ENCODE measurements at regions of chr2 and their contacts with region 1.

Region 1: DNA sequence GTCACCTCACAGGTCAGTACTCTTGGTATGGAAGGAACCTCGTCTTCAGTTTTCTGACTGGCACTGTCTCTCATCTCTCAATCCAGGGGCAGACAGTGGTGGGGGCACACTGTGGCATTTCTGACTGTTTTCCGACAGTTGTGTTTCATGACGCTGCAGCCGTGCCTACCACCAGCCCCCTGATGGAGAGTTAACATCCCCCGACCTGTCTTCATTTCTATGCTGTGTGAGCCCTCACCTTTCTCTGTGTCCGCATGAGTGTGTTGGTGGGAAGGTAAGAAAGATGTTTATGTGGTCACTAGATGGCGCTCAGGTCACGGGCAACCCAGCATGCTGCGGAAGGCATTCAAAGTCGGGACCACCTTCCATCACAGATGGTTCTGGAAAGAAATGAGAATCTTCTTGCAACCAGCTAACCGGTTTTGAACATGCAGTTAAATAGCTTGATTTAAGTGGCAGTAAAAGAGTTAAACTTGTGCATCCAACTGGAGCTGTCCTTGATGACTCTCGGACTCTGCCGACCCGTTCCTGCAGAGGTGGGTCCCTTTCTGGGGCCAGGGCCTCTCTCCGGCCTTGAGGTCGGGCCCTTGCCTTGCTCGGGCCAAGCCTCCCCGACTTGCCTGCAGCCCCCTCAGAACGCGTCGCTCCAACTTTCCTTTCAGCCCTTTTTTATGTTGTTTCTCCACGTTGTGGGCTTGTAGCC is 92.4 kb downstream of the DYSF start:
- DNase-seq: peak in 1 of 2 donors; percentile 44
- ATAC-seq: peak; percentile 46 to 60
- H3K4me3 ChIP-seq: peak overlapping the region in 1 of 4 donors; percentile 30
- H3K27ac ChIP-seq: peak overlapping the region in 3 of 4 donors; percentile 46 to 69 (median 69)
- H3K4me1 ChIP-seq: no peaks in the 10 kb centered on the region
- H3K27me3 ChIP-seq: no peaks in the 10 kb centered on the region
- CTCF ChIP-seq: peak; percentile 46 to 74 (median 64)
- POLR2A ChIP-seq: no peak

Region 2: GRCh38 chr2:71784734-71785473 is 239.2 kb after region 1 on chr2:
- in situ Hi-C with region 1: loop called in 1 of 4 experiments (anchors 10 kb)
- intact Hi-C with region 1: no loop called
- DNase-seq: peak; percentile 48 to 75
- ATAC-seq: peak; percentile 97 to 98
- H3K4me3 ChIP-seq: no peak overlapping the region
- H3K27ac ChIP-seq: peak overlapping the region; percentile 30 to 71 (median 48)
- H3K4me1 ChIP-seq: peaks cover 13 to 14% of the 10 kb centered on the region in 2 donors
- H3K27me3 ChIP-seq: no peaks in the 10 kb centered on the region
- CTCF ChIP-seq: peak in 3 of 5 experiments; percentile 8 to 38 (median 13)
- POLR2A ChIP-seq: no peak

Region 3: GRCh38 chr2:71995067-71995665 is 449.4 kb after region 1 on chr2:
- in situ Hi-C with region 1: no loop called
- intact Hi-C with region 1: loop called (anchors 2 kb)
- DNase-seq: no peak
- ATAC-seq: peak; percentile 23 to 82
- H3K4me3 ChIP-seq: no peak overlapping the region
- H3K27ac ChIP-seq: no peak overlapping the region
- H3K4me1 ChIP-seq: no peaks in the 10 kb centered on the region
- H3K27me3 ChIP-seq: no peaks in the 10 kb centered on the region
- CTCF ChIP-seq: peak; percentile 63 to 79 (median 69)
- POLR2A ChIP-seq: no peak

Region 4: GRCh38 chr2:72579591-72580180 is 1034.0 kb after region 1 on chr2:
- in situ Hi-C with region 1: loop called (anchors 10 to 25 kb)
- intact Hi-C with region 1: loop called (anchors 5 kb)
- DNase-seq: no peak
- ATAC-seq: peak in 1 of 2 donors; percentile 71
- H3K4me3 ChIP-seq: no peak overlapping the region
- H3K27ac ChIP-seq: no peak overlapping the region
- H3K4me1 ChIP-seq: peaks cover 0 to 9% of the 10 kb centered on the region in 2 donors
- H3K27me3 ChIP-seq: no peaks in the 10 kb centered on the region
- CTCF ChIP-seq: peak in 4 of 5 experiments; percentile 50 to 70 (median 59)
- POLR2A ChIP-seq: no peak

Region 5: GRCh38 chr2:72745679-72746368 is 1200.1 kb after region 1 on chr2:
- in situ Hi-C with region 1: loop called in 3 of 4 experiments (anchors 25 kb)
- intact Hi-C with region 1: loop called (anchors 5 kb)
- DNase-seq: no peak
- ATAC-seq: peak; percentile 68 to 78
- H3K4me3 ChIP-seq: peak overlapping the region in 2 of 4 donors; percentile 1 to 19
- H3K27ac ChIP-seq: no peak overlapping the region
- H3K4me1 ChIP-seq: peaks cover 0 to 10% of the 10 kb centered on the region in 2 donors
- H3K27me3 ChIP-seq: no peaks in the 10 kb centered on the region
- CTCF ChIP-seq: peak; percentile 20 to 79 (median 69)
- POLR2A ChIP-seq: no peak